A673 (cell line): ENCODE measurements at regions of chr3 and their contacts with region 1.

Region 1: DNA sequence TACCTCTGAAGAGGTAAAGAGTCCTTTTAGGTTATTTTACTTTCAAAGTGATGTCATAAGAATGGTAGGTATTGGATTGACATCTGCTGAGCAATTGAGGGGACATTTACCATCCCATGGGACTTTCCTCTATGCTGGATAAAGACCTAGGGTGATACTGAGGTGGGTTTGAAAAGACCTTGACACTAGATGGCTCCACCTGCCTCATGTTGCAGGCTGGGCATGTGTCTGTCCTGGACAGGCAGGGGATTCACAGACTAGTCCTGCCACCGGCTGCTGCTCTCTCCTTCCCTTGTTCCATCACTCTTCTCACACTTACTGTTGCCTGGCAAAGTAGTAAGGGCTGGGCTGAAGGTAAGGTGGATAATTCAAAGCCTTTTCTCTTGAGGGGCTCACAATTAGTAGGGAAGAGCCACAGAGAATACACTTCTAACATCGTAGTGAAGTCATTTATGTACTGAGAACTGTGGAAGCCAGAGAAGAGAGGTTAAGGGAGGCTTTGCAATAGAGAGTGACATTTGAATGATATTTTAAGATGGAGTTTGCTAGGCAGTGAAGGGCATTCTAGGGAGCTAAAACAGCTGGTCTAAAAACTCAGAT is 27.7 kb downstream of the TRAK1 start:
- DNase-seq: peak; percentile 43
- H3K4me3 ChIP-seq: no peak overlapping the region
- H3K27ac ChIP-seq: no peak overlapping the region
- H3K4me1 ChIP-seq: peaks cover 15% of the 10 kb centered on the region
- H3K27me3 ChIP-seq: no peaks in the 10 kb centered on the region
- CTCF ChIP-seq: peak; percentile 41; the same call in 1 of the 2 replicates

Region 2: DNA sequence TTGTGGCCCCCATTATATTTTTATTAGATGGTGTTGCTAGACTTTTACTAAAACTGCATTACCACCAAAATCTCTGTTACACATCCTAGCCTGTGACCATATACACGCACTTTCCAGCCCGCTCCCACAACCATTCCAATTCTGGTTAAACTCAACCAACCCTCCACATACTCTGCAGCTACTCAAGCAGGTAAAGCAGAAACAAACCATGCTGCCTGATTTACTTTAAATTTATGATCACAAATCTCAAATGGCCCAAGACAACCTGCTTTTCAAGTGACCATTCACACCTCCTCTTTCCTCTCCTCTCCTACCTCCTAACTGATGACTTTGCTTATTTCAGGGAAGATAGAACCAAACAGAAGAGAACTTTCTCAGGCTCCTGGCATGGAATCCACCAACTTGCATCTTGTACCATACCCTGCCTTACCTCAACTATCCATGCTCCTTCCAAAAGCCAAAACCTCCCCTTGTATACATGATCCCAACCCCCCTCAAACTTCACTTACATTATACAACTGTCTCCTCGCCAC is 175.5 kb before region 1 on chr3:
- CTCF ChIA-PET with region 1: no interaction called
- POLR2A ChIA-PET with region 1: no interaction called
- intact Hi-C with region 1: no loop called
- DNase-seq: no peak
- H3K4me3 ChIP-seq: no peak overlapping the region
- H3K27ac ChIP-seq: no peak overlapping the region
- H3K4me1 ChIP-seq: peaks cover 4% of the 10 kb centered on the region
- H3K27me3 ChIP-seq: no peaks in the 10 kb centered on the region
- CTCF ChIP-seq: no peak

Region 3: DNA sequence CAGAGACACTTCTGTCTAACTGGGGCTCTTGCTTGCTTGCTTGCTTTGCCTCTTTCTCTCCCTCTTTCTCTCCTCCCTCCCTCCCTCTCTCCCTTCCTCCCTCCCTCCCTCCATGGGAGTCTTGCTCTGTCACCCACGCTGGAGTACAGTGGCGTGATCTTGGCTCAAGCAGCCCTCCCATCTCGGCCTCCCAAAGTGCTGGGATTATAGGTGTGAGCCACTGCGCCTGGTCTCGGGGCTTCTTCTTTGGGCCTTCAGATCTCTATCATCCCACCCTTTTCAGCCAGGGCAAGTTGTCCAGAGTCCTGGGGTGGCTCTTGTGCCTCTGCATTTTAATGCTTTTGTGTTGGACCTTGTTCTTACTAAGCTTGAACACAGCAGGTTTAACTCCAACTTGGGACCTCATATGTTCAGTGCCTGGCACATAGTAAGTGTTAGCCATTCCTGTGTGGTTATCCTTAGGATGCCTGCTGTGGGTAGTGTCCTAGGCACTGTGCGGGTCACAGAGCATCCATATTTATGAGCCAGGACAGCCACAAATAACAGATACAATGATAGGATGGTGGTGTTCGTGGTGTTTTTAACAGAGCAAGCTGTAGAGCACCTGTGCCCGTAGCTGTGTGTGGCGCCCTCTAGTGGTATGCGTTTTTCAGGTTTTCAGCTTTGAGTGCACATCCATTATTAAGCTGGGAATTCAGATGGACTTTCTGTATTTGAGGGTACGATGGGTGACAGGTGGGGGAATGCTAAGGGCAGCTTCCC is 72.0 kb after region 1 on chr3:
- CTCF ChIA-PET with region 1: interaction called, 21 read pairs
- POLR2A ChIA-PET with region 1: no interaction called
- intact Hi-C with region 1: loop called (anchors 2 kb)
- DNase-seq: peak; percentile 59
- H3K4me3 ChIP-seq: no peak overlapping the region
- H3K27ac ChIP-seq: no peak overlapping the region
- H3K4me1 ChIP-seq: no peaks in the 10 kb centered on the region
- H3K27me3 ChIP-seq: no peaks in the 10 kb centered on the region
- CTCF ChIP-seq: peak; percentile 71